Right ventricle myocardium inferior (tissue), 1 donor: ENCODE measurements at regions of chr4 and their contacts with region 1.

Region 1: DNA sequence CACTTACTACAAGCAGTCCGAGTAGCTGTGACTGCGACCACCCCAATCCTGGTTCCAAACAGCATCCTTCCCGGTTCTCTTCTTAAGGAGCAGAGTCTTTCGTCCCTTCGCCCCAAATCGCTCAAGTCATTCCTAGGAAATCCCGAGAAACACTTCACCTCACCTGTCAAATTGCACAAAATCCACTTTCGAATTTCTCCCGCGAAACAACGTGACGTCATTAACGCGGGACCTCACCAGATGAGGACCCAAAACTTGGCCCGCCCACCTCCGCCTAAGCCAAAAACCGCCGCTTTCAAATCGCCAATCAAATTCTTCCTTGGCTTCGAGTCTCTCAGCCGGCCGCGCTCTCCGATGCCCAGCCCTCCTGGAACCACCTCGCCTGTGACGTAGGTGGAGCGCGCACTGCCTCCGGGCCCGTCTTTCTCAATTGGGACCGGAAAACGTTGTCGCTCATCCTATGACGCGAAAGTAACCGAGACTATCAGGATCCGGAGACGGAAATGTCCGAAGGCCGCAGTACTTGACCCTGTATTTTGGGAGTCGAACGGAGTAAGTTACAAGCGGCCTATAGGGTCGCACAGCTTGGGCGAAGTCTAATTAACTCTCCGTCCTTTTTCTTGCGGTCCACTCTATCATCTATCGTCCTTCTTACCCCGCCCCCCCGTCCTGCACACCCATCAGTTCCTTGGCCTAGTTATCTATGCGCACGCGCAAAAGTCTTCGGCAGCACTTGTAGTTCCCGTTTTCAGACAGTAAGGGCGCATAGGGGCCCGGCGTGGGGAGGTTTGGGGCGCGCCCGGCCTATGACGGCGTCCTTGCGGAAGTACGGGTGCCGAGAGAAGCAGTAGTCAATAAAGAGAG is at the starts of genes LARP7 and ZGRF1:
- DNase-seq: peak; percentile 99
- ATAC-seq: peak; percentile 96
- total RNA-seq, gene LARP7: 62.2 TPM
- total RNA-seq, gene ZGRF1: 2.1 TPM

Region 2: DNA sequence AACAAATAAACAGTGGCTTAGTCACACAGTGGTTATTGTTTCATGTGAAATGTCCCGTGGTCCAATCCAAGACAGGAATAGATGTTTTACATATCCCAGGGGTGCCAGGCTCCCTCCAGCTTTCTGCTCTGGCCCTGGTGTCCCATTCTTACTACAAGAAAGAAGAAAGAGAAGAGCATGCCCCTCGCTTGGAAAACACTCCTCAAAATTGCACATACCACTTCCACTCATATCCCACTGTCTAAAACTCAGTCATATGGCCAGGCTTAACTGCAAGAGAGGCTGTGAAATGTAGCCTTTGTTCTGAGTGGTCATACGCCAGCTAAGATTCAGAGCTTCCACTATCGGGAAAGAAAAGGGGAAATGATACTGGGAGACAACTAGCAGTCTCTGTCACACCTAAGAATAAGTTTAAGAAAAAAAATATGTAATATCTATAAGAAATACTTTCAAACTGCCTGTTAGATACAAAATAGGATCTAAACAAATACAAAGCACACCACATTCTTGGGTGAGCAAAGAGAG is 798.5 kb before region 1 on chr4:
- intact Hi-C with region 1: no loop called
- DNase-seq: no peak
- ATAC-seq: no peak

Region 3: DNA sequence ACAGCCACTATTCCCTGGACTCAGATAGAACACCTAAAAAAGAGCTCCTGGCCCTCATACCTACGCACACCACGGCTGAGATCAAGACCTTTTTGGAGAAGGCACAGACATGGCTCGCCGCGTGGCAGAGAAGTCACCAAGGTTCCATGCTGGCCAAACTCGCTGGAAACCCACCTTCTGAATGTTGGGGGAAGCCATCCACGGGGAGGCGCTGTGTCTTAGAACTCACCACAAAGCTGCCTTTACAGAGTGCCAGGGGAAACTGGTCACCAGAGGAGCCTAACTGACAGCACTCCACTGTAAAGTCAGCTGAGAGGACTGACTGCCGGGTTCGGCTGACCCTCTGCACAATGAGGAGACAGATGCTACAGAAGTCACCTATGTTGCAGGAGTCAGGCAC is 218.8 kb before region 1 on chr4:
- intact Hi-C with region 1: no loop called
- DNase-seq: no peak
- ATAC-seq: no peak

Region 4: GRCh38 chr4:112674376-112674775 is 37.5 kb after region 1 on chr4:
- intact Hi-C with region 1: loop called (anchors 1 kb)
- DNase-seq: no peak
- ATAC-seq: no peak

Region 5: GRCh38 chr4:112704991-112705845 is 68.3 kb after region 1 on chr4:
- intact Hi-C with region 1: loop called (anchors 5 kb)
- DNase-seq: peak; percentile 71
- ATAC-seq: peak; percentile 79

Region 6: GRCh38 chr4:112765317-112765975 is 128.5 kb after region 1 on chr4:
- intact Hi-C with region 1: loop called (anchors 1 kb)
- DNase-seq: no peak
- ATAC-seq: peak; percentile 59

Region 7: DNA sequence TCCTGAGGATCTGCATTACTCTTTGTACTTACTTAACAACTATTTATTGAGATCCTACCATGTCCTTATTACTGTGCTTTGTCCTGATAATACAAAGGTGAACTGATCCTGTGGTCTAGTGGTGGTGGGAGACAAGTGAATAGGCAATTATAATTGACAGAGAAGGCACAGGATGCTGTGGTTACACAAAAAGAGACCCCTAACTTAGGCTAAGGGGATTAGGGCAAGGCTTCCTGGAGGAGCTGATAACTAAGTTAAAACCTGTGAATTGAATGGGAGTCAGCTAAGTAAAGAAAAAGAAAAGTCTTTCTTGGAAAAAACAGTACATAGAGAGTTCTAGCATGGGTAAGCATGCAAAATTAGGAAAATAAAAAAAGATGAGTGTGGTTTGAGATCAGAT is 164.4 kb after region 1 on chr4:
- intact Hi-C with region 1: no loop called
- DNase-seq: no peak
- ATAC-seq: no peak

Region 8: DNA sequence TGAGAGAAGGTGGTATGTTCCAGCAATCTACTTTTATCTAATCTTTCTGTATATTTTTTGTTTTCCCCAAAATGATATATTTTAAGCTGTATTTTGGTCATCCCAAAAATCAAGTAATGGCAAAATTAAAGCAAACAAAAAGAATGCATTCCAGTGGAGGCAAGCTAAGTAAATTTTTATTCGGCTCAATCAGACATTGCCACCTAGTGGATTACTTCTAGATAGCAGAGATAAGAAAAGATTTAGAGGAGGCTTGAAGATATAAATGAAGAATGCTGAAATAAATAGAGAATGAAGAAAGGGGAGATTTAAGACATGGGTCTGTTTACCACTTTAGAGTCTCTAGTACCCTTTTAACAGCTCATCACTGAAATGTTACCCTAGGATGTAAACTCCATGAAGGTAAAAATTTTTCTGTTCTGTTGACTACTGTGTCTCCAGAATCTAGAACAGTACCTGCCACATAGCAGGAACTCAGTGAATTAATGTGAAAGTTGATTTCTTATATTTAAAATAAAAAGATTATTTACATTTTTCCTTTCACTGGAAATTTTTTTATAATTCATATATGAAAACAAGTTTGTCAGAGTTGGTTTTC is 301.6 kb after region 1 on chr4:
- intact Hi-C with region 1: loop called (anchors 5 kb)
- DNase-seq: no peak
- ATAC-seq: no peak

Region 9: DNA sequence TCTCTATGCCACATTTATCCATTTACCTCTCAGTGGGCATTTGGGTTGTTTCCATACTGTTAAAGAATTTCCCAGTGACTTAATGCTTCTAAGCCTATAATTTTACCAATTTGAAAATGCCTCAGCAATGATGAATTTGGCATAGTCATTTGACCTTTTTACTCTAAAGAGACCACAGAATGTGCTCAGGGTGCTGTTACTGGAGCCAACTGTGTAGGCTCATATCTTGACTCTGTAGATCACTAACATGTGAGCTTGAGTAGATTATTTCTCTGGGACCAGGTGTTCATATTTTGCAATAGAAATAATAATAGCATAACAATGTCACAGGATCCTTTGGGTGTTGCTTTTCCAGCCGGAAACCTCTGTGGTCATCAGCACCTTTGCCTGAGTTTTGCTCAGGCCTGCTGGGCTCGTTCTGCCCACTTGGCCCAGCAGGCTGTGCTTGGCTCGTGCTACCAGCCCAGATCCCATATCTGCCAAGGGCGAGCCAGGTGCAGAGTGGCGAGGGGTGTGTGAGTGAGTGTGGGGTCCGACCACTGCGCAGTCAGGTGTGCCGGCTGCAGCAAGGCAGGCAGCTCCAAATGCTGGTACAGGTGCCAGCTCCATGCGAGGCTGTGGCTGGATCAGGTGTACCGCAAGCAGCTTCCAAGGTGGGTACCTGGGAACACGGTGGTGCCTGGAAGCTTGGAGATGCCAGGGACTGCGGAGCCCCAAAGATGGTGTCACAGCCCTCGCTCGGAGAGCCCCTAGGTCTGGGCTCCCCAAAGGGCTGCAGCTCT is 342.0 kb after region 1 on chr4:
- intact Hi-C with region 1: no loop called
- DNase-seq: no peak
- ATAC-seq: no peak

Region 10: DNA sequence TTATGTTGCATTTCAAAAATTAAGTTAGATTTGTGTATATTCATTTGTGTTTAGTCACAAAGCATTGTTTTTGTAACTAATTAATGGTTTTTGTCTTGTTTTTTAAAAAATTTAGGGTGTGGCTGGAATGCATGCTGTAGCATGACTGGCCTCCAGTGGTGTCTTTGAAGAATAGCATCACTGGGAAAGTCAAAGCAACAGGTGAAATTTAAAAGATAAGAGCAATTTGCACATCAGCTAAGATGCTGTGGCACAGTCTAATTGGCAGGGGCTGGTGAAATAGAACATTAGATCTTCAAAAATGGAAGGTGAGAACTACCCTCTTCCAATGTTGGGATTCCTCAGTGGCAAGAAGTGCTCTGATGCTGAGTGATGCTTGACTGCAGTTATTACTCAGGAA is 457.9 kb after region 1 on chr4:
- intact Hi-C with region 1: loop called (anchors 10 kb)
- DNase-seq: no peak
- ATAC-seq: no peak